ENCODE measurements at regions of chr4 and their contacts with region 1.

Region 1: DNA sequence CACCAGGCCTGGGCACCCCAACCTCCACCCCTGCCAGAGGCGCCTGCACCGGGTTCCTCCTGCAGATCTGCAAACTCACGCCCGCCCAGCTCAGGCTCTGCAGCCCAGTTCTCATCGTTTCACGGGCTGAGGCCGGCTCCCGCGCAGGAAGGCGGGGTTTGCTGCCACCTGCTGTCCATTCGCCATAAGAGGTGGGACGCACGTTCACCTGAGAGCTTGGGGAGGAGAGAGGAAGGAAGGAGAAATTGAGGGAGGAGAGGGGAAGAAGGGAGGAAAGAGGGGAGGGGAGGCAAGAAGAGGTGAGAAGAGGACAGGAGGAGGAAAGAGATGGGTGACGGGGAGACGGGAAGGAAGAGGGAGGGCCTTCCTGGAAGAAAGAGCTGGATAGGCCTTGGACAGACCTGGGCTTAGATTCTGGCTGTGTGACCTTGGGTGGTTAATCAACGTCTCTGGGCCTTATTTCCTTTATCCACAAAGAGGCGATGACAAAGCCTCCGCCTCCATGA is 114.5 kb downstream of the ADRA2C start:
- DNase-seq: peak; percentile 50
- H3K4me3 ChIP-seq: no peak overlapping the region
- H3K27ac ChIP-seq: no peak overlapping the region
- H3K4me1 ChIP-seq: no peaks in the 10 kb centered on the region
- H3K27me3 ChIP-seq: peaks cover 13% of the 10 kb centered on the region
- CTCF ChIP-seq: peak; percentile 49 to 75

Region 2: DNA sequence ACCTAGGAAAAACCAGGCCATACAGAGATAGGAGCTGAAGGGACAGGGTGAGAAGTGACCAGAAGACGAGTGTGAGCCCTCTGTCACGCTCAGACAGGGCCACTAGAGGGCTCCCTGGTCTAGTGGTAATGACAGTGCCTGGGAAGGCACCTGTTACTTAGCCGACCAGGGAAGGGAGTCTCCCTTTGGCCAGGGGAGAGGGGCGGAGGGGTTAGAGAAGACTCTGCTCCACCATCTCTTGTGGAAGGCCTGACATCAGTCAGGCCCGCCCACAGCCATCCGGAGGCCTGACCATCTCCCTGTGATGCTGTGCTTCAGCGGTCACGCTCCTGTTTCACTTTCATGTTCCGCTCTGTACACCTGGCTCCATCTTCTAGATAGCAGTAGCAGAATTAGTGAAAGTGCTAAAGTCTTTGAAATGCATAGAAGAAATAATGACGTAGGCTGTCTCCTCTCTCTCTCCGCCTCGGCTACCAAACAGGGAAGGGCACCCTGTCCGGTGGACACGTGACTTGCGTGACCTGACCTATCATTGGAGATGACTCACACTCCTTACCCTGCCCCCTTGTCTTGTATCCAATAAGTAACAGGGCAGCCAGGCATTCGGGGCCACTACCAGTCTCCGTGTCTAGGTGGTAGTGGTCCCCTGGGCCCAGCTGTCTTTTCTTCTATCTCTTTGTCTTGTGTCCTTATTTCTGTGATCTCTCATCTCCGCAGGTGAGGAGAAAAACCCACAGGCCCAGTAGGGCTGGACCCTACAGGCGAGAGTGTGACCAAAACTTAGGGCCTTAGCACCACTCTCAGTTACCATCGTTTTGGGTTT is 833.0 kb before region 1 on chr4:
- CTCF ChIA-PET with region 1: no interaction called
- dilution Hi-C with region 1: no loop called
- in situ Hi-C with region 1: no loop called
- intact Hi-C with region 1: loop called (anchors 1 kb)
- DNase-seq: peak; percentile 31
- H3K4me3 ChIP-seq: no peak overlapping the region
- H3K27ac ChIP-seq: no peak overlapping the region
- H3K4me1 ChIP-seq: no peaks in the 10 kb centered on the region
- H3K27me3 ChIP-seq: no peaks in the 10 kb centered on the region
- CTCF ChIP-seq: peak; percentile 57 to 82

Region 3: GRCh38 chr4:3193531-3194203 is 687.0 kb before region 1 on chr4:
- CTCF ChIA-PET with region 1: no interaction called
- dilution Hi-C with region 1: no loop called
- in situ Hi-C with region 1: no loop called
- intact Hi-C with region 1: loop called (anchors 5 kb)
- DNase-seq: no peak
- H3K4me3 ChIP-seq: no peak overlapping the region
- H3K27ac ChIP-seq: no peak overlapping the region
- H3K4me1 ChIP-seq: peaks cover 7% of the 10 kb centered on the region
- H3K27me3 ChIP-seq: no peaks in the 10 kb centered on the region
- CTCF ChIP-seq: peak; percentile 25 to 43

Region 4: DNA sequence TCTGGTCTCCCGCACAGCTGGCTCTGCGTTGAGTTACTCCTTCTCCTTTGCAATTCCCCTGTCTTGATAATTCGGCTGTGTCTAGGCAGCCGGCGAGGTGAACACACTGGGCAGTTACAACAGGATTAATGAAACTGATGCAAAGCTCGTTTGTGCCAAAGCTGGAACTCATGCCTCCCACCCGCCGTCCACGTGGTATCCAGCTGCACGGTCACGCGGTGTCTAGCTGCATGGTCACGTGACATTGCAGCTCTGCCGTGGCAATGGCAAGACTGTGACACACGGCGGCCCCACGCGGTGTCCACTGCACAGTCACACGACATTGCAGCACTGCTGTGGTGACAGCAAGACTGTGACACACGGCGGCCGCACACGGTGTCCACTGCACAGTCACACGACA is 317.3 kb before region 1 on chr4:
- CTCF ChIA-PET with region 1: no interaction called
- dilution Hi-C with region 1: no loop called
- in situ Hi-C with region 1: no loop called
- intact Hi-C with region 1: loop called (anchors 10 kb)
- DNase-seq: no peak
- H3K4me3 ChIP-seq: no peak overlapping the region
- H3K27ac ChIP-seq: no peak overlapping the region
- H3K4me1 ChIP-seq: no peaks in the 10 kb centered on the region
- H3K27me3 ChIP-seq: no peaks in the 10 kb centered on the region
- CTCF ChIP-seq: no peak

Region 5: DNA sequence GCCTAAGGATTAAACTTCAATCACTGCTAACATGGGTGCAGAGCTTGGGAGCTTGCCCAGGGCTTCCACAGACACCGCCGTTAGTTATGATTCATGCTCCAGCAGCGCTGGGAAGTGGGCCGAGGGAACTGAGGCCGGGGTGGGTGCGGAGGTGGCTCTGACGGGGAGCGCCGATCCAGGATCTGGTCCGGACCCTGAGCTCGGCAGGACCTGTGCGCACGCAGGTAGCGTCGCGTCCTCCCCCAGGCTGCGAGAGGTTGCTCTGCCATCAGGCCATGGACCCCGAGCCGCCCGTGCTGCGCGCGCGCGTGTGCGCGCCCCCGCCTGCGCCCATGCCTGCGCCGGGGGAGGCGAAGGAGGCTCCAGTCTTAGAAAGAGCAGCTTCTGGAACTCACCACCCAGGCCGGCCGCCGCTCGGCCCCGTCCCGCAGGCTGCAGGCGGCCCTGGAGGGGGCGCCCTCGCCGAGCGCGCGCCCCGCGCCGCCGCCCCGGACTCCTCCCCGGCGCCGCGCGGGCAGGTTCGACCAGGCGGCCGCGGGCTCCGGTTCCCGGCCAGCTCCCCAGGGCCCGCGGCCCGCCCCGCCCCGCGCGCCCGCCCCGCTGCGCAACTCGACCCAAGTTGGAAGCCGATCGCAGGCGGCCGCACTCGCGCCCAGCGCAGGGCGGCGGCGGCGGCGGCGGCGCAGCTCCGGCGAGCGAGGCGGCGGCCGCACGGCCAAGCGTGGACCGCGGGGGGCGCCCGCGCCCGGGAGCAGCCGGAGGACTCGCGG is 115.2 kb before region 1 on chr4:
- CTCF ChIA-PET with region 1: interaction called, 6 read pairs
- dilution Hi-C with region 1: no loop called
- in situ Hi-C with region 1: no loop called
- intact Hi-C with region 1: loop called (anchors 5 kb)
- DNase-seq: peak; percentile 33
- H3K4me3 ChIP-seq: peak overlapping the region in 1 of 3 experiments; percentile 21
- H3K27ac ChIP-seq: no peak overlapping the region
- H3K4me1 ChIP-seq: no peaks in the 10 kb centered on the region
- H3K27me3 ChIP-seq: peaks cover 10% of the 10 kb centered on the region
- CTCF ChIP-seq: no peak

Region 6: GRCh38 chr4:3836756-3837601 is 43.7 kb before region 1 on chr4:
- CTCF ChIA-PET with region 1: no interaction called
- dilution Hi-C with region 1: no loop called
- in situ Hi-C with region 1: no loop called
- intact Hi-C with region 1: no loop called
- DNase-seq: no peak
- H3K4me3 ChIP-seq: no peak overlapping the region
- H3K27ac ChIP-seq: no peak overlapping the region
- H3K4me1 ChIP-seq: no peaks in the 10 kb centered on the region
- H3K27me3 ChIP-seq: no peaks in the 10 kb centered on the region
- CTCF ChIP-seq: no peak

Region 7: GRCh38 chr4:4901877-4902276 is 1021.2 kb after region 1 on chr4:
- CTCF ChIA-PET with region 1: interaction called, 11 read pairs
- dilution Hi-C with region 1: no loop called
- in situ Hi-C with region 1: no loop called
- intact Hi-C with region 1: no loop called
- DNase-seq: no peak
- H3K4me3 ChIP-seq: no peak overlapping the region
- H3K27ac ChIP-seq: no peak overlapping the region
- H3K4me1 ChIP-seq: no peaks in the 10 kb centered on the region
- H3K27me3 ChIP-seq: no peaks in the 10 kb centered on the region
- CTCF ChIP-seq: no peak